Left lung (tissue), 14 donors: ENCODE measurements at regions of chr13 and their contacts with region 1.

Region 1: DNA sequence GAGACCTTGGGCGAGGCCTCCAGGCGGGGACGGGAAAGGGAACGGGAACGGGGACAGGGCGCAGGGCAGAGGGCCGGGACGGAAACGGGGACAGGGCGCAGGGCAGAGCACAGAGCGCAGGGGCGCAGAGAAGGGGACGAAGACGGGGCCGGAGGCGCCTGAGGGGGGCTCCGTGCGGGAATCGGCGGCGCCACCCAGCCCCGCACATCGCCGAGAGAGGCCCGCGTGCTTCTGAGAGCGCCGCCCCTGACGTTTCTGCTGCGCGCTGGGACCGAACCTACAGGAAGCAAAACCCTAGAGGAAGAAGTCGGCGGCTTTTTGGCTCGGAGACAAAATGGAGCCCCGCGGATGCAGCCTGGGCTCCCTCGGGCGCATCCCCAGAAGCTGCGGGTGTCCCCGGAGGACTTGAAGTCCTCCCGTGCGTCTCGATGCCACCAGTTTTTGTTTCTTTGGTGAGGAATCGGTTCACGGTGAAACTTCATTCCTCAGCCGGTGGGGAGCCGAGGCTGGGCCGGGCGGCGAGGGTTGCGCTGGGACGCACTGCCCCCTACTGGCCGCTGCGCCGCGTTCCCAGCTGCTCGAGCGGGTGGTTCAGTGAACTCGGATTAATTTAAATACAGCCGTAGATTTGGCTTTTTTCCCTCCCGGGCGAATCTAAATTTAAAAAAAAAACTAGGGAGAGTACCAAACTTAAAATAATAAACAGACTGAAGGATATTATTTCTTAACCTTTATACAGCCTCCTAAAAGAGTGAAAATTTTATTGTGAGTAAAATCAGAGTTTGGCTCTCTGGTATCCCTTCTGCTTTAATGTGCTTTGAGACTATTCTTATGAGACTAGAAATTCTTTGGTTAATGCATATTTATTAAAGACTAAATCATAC is 350.0 kb upstream of the ARGLU1 start:
- DNase-seq: peak; percentile 76 to 93 (median 89)
- ATAC-seq: peak; percentile 99
- H3K4me3 ChIP-seq: peak overlapping the region; percentile 46 to 65
- H3K27ac ChIP-seq: peak overlapping the region; percentile 76 to 88
- H3K4me1 ChIP-seq: peaks cover 0 to 6% of the 10 kb centered on the region in 2 donors
- H3K27me3 ChIP-seq: peaks cover 0 to 10% of the 10 kb centered on the region in 2 donors
- CTCF ChIP-seq: peak; percentile 91 to 95

Region 2: GRCh38 chr13:106490569-106491321 is 427.2 kb before region 1 on chr13:
- intact Hi-C with region 1: no loop called
- DNase-seq: no peak
- ATAC-seq: no peak
- H3K4me3 ChIP-seq: no peak overlapping the region
- H3K27ac ChIP-seq: no peak overlapping the region
- H3K4me1 ChIP-seq: peaks cover 4 to 36% of the 10 kb centered on the region in 2 donors
- H3K27me3 ChIP-seq: peaks cover 0 to 24% of the 10 kb centered on the region in 2 donors
- CTCF ChIP-seq: no peak

Region 3: DNA sequence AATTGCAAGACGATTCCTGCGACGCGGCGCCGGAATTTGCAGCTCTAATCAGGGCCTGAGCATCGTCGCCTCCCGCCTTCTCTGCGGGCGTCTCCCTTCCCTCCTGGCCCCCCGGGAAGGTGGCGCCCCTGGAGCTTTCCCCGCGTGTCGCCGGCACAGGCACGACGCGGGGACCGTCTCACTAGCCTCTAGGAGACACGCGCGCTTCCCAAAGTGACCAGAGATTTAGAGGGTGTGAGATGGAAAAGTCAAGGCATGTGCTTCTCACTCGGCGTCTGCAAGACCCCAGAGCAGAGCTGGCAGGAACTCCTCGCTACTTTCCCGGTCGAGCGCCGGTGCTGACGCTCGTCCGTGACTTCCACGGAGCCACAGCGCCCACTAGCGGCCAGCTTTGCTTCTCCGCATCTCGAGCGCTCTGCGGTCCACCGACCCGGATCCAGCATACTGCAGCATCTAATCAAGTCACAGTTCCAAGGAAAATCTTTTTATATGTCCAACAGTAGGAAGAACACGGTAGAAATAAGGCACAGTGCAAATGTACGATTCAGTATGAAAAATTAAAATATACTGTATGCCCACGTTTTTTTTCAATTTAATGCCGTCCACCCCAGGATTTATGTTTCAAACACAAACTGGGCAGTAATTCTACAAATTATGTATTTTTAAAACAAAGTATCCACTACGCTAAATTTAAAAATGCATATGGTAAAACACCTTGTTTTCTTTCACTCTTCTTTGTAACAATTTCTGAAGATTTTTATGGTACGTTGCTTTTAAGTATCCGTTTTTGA is 381.5 kb before region 1 on chr13:
- intact Hi-C with region 1: loop called in 1 of 2 experiments (anchors 10 kb)
- DNase-seq: peak; percentile 91 to 99 (median 94)
- ATAC-seq: peak; percentile 70
- H3K4me3 ChIP-seq: peak overlapping the region; percentile 65 to 70
- H3K27ac ChIP-seq: peak overlapping the region; percentile 62 to 68
- H3K4me1 ChIP-seq: peaks cover 0 to 30% of the 10 kb centered on the region in 2 donors
- H3K27me3 ChIP-seq: peaks cover 0 to 40% of the 10 kb centered on the region in 2 donors
- CTCF ChIP-seq: peak; percentile 87 to 96

Region 4: DNA sequence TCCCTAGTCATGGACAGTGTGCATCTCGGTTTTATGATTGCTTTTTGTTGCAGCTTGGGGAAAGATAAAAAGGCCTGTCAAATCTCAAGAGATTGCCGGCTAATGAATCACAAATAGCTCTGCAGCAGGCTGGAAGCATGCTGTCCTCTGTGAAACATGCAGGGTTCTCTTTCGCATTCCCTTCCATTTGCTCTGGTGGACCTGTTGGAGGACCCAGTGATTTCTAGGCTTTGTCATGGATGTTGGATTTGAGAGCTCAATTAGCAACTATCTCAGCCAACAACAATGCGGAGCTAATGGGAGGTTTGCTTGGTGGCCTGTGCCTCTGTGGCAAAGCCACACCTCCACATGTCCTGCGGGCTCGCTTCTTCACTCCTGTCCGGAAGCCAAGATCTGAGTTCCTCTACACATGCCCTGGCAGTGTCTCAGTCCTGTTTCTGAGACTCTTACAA is 68.1 kb after region 1 on chr13:
- intact Hi-C with region 1: no loop called
- DNase-seq: no peak
- ATAC-seq: no peak
- H3K4me3 ChIP-seq: no peak overlapping the region
- H3K27ac ChIP-seq: no peak overlapping the region
- H3K4me1 ChIP-seq: no peaks in the 10 kb centered on the region
- H3K27me3 ChIP-seq: no peaks in the 10 kb centered on the region
- CTCF ChIP-seq: no peak

Region 5: DNA sequence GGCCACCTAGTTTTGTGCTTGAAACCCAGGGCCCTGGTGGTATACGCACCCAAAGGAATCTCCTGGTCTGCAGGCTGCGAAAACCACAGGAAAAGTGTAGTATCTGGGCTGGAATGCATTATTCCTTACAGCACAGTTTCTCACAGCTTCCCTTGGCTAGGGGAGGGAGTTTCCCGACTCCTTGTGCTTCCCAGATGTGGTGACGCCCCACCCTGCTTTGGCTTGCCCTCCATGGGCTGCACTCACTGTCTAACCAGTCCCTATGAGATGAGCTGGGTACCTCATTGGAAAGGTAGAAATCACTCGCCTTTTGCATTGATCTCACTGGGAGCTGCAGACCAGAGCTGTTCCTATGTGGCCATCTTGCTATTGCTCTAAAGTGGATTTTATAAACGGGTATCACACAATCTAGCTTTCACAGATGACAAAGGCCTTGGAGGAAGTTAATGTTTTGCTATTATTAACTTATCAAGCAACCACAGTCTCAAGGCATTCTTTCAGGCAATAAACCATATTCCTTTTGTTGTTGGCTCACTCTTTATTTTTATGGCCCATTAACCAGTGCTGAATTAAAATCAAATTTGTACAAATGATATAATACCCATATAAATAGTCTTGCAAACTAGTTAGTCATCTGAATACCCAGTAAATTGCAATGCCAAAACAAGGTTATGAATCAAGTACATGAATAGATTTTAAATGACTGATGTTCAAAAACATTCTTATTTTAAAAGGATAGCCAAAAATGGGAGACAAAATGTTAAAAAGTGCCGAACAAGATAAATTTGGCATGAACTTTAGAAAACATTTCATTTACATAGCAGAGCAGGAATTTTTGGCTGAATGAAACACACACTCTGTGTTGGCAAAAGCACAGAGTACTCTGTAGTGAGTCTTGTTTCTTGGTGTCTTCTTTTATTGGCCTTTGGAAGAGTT is 125.4 kb after region 1 on chr13:
- intact Hi-C with region 1: no loop called
- DNase-seq: no peak
- ATAC-seq: peak; percentile 49
- H3K4me3 ChIP-seq: no peak overlapping the region
- H3K27ac ChIP-seq: peak overlapping the region in 1 of 2 donors; percentile 26
- H3K4me1 ChIP-seq: no peaks in the 10 kb centered on the region
- H3K27me3 ChIP-seq: no peaks in the 10 kb centered on the region
- CTCF ChIP-seq: no peak

Region 6: DNA sequence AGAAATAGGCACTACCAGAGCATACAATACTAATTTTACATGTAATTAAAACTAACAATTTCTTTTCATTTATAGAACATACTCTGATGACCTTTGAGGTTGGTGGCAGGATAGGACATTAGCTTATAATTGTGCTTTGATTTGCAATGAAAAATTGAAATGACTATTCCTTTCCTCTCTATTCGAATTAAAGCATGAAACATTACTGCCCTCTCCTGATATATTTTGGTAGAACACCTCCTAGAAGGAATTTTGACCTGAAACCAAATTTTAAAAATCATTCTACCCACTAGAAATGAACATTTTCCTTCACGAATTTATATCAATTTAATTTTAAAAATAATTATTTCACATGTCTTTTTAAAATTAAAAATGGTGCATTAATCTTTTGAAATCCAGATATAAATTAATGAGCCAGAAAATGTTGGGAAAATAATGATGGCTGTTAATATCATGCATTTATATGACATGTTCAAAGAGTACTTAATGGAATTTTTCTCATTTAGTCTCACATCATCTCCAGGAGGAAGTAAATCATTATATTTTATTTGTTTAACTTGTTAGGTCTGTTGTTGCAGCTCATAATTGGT is 206.3 kb after region 1 on chr13:
- intact Hi-C with region 1: loop called in 1 of 2 experiments (anchors 5 kb)
- DNase-seq: peak in 1 of 4 donors; percentile 45
- ATAC-seq: peak; percentile 61
- H3K4me3 ChIP-seq: no peak overlapping the region
- H3K27ac ChIP-seq: no peak overlapping the region
- H3K4me1 ChIP-seq: no peaks in the 10 kb centered on the region
- H3K27me3 ChIP-seq: no peaks in the 10 kb centered on the region
- CTCF ChIP-seq: peak; percentile 46 to 59